ENCODE measurements at regions of chr3 and their contacts with region 1.

Region 1: DNA sequence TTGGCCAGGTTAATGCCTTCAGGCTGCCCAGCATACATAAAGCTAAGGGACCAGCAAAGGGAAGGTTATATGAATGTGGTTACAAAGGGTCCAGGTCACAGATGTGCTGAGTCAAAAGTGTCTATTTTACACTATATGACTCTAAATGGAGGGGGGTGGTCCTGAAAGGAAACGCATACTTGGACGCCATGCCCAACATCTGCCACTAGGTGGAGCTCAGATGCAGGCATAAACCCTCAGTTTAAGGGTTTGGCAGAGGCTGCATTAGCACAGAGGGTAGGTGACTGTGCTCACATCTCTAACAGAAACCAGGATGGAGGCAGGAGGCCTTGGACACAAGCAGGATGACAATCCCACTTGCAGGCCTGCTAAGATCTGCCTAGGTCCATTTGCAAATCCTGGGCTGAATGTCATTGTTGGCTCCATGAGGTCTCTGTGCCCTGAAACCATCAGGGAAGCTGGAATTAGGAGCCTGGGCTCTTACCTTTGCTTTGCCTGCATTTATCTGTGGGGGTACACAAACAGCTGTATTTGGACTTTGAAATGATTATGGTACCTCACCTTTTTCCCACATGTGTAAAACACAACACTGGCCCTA is 55.8 kb downstream of the ZNF621 start:
- DNase-seq: peak; percentile 56 to 60
- ATAC-seq: peak; percentile 60 to 78 (median 68)
- H3K4me3 ChIP-seq: no peak overlapping the region
- H3K27ac ChIP-seq: no peak overlapping the region
- H3K4me1 ChIP-seq: no peaks in the 10 kb centered on the region
- H3K27me3 ChIP-seq: no peaks in the 10 kb centered on the region
- CTCF ChIP-seq: peak; percentile 92

Region 2: GRCh38 chr3:40329071-40329470 is 251.5 kb before region 1 on chr3:
- intact Hi-C with region 1: loop called in 1 of 2 experiments (anchors 5 kb)
- DNase-seq: no peak
- ATAC-seq: no peak
- H3K4me3 ChIP-seq: no peak overlapping the region
- H3K27ac ChIP-seq: no peak overlapping the region
- H3K4me1 ChIP-seq: no peaks in the 10 kb centered on the region
- H3K27me3 ChIP-seq: no peaks in the 10 kb centered on the region
- CTCF ChIP-seq: no peak

Region 3: DNA sequence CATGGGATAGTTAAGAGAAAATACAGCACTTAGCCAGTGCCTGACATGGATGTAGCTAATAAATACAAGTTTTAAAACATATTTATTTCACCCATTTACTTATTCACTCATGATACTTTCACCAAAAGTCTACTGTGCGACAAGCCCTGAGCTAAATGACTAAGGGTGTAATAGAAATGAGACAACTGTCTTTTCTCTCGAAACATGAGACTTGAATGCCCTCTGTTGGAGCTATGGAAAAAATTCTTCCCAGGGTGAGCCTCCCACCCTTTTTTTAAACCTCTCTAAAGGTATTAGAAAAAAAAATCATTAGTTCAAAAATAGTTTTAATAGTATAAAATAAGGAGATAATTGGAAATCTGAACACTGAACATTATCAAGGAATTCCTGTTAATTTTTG is 147.8 kb before region 1 on chr3:
- intact Hi-C with region 1: no loop called
- DNase-seq: no peak
- ATAC-seq: no peak
- H3K4me3 ChIP-seq: no peak overlapping the region
- H3K27ac ChIP-seq: no peak overlapping the region
- H3K4me1 ChIP-seq: no peaks in the 10 kb centered on the region
- H3K27me3 ChIP-seq: no peaks in the 10 kb centered on the region
- CTCF ChIP-seq: no peak

Region 4: GRCh38 chr3:40971191-40972168 is 390.9 kb after region 1 on chr3:
- intact Hi-C with region 1: loop called in 1 of 2 experiments (anchors 10 kb)
- DNase-seq: peak; percentile 68 to 70
- ATAC-seq: peak; percentile 65 to 90 (median 86)
- H3K4me3 ChIP-seq: no peak overlapping the region
- H3K27ac ChIP-seq: peak overlapping the region; percentile 56
- H3K4me1 ChIP-seq: no peaks in the 10 kb centered on the region
- H3K27me3 ChIP-seq: no peaks in the 10 kb centered on the region
- CTCF ChIP-seq: no peak

Region 5: DNA sequence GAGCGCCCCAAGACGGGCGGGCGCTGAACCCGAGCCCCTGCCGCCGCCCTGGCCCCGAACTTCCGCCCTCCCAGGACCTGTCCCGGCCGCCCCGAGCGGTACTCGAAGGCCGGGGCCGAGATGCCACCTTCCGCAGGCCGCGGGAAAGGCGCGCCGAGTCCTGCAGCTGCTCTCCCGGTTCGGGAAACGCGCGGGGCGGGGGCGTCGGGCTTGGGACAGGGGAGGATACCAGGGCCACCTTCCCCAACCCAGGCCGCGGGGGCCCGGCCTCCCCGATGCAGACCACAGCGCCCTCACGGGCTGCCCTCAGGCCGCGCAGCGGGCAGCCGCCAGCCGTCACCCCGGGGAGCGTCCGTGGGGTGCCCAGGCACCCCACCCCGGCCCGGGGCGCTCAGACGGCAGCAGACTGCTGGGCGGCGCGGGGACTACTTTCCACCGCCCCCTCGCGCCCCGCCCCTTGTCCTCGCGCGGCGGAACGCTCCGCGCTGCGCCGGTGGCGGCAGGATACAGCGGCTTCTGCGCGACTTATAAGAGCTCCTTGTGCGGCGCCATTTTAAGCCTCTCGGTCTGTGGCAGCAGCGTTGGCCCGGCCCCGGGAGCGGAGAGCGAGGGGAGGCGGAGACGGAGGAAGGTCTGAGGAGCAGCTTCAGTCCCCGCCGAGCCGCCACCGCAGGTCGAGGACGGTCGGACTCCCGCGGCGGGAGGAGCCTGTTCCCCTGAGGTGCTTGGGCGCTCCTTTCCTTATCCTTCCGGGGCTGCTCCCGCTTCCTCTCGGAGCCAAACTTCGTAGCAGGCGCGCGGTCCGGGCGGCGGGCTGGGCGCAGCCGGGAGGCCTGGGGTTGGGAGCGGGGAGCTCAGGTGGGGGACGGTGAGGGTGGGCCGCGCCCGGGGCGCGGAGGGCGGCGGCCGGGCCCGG is 618.6 kb after region 1 on chr3 and contains the start of gene CTNNB1:
- intact Hi-C with region 1: loop called in 1 of 2 experiments (anchors 5 kb)
- DNase-seq: peak; percentile 94 to 96
- ATAC-seq: peak; percentile 93 to 97 (median 94)
- H3K4me3 ChIP-seq: peak within 1 kb of the TSS; percentile 97
- H3K27ac ChIP-seq: peak within 1 kb of the TSS; percentile 98
- H3K4me1 ChIP-seq: peaks cover 33% of the 10 kb centered on the region
- H3K27me3 ChIP-seq: no peaks in the 10 kb centered on the region
- CTCF ChIP-seq: peak; percentile 13
- total RNA-seq, gene CTNNB1: 93.8 to 128 (median 113) TPM

Region 6: GRCh38 chr3:42090973-42091731 is 1510.6 kb after region 1 on chr3 and contains the start of gene TRAK1:
- intact Hi-C with region 1: loop called in 1 of 2 experiments (anchors 10 kb)
- DNase-seq: peak in 1 of 2 donors; percentile 59
- ATAC-seq: peak; percentile 74 to 85 (median 78)
- H3K4me3 ChIP-seq: peak within 1 kb of the TSS; percentile 57
- H3K27ac ChIP-seq: peak within 1 kb of the TSS; percentile 85
- H3K4me1 ChIP-seq: peaks cover 25% of the 10 kb centered on the region
- H3K27me3 ChIP-seq: no peaks in the 10 kb centered on the region
- CTCF ChIP-seq: no peak
- total RNA-seq, gene TRAK1: 94.8 to 128 (median 120) TPM

Measured in psoas muscle (tissue), 8 donors.